CD8-positive, alpha-beta T cell (primary cell): ENCODE measurements at regions of chr18 and their contacts with region 1.

Region 1: DNA sequence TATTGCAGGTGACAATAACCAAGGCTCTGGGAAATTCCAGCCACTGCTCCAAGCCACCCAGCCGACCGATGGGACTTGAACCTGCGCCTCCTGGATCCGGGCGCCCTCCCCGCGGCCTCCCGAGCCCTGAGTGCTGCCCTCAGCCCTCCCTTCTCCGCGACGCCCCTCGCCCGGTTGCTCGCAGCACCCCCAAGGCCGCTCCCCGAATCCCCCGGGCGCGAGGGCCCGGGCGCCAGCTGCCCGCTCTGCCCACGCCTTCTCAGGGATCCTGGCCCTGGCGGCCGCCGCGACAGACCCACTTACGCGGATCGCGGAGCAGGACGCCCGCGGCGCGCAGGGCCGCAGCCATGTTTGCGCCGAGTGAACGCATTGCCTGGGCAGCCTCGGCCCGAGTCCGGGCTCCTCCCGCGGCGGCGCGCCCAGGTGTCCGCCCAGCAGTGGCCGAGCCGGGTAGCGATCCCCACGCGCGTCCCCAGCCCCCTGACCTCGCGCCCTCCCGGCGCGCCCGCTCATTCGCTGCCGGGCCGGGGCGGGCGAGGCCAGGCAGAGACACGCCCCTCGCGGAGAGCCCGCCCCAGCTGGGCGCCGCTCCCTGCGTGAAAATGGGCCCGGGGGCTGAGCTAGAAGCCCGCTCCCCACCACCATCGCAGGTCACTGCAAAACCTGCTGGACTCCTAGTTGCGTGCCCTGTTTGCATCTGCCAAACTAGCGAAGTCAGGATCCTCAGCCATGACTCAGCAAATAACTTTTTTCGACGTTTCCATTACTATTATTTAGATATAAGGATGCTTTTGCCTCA is at the start of gene FECH:
- DNase-seq: peak; percentile 34 to 82 (median 66)
- ATAC-seq: peak; percentile 97
- H3K4me3 ChIP-seq: peak within 1 kb of the TSS; percentile 73 to 87
- H3K4me3 Mint-ChIP-seq: peak within 1 kb of the TSS; percentile 88
- H3K27ac ChIP-seq: peak within 1 kb of the TSS; percentile 29 to 66
- H3K27ac Mint-ChIP-seq: peak within 1 kb of the TSS; percentile 85
- H3K4me1 ChIP-seq: peaks cover 23% of the 10 kb centered on the region
- H3K4me1 Mint-ChIP-seq: peaks cover 26% of the 10 kb centered on the region
- H3K27me3 ChIP-seq: no peaks in the 10 kb centered on the region
- H3K27me3 Mint-ChIP-seq: no peaks in the 10 kb centered on the region
- CTCF ChIP-seq: no peak
- total RNA-seq, gene FECH: 10.6 to 11.3 TPM

Region 2: GRCh38 chr18:56727399-56727798 is 859.1 kb before region 1 on chr18:
- CTCF ChIA-PET with region 1: no interaction called
- POLR2A ChIA-PET with region 1: no interaction called
- intact Hi-C with region 1: no loop called
- DNase-seq: no peak
- ATAC-seq: no peak
- H3K4me3 ChIP-seq: no peak overlapping the region
- H3K4me3 Mint-ChIP-seq: no peak overlapping the region
- H3K27ac ChIP-seq: no peak overlapping the region
- H3K27ac Mint-ChIP-seq: no peak overlapping the region
- H3K4me1 ChIP-seq: no peaks in the 10 kb centered on the region
- H3K4me1 Mint-ChIP-seq: no peaks in the 10 kb centered on the region
- H3K27me3 ChIP-seq: no peaks in the 10 kb centered on the region
- H3K27me3 Mint-ChIP-seq: no peaks in the 10 kb centered on the region
- CTCF ChIP-seq: no peak

Region 3: GRCh38 chr18:57630002-57630753 is 43.7 kb after region 1 on chr18:
- CTCF ChIA-PET with region 1: no interaction called
- POLR2A ChIA-PET with region 1: interaction called, 3 read pairs
- intact Hi-C with region 1: loop called in 1 of 2 experiments (anchors 2 kb)
- DNase-seq: peak; percentile 86 to 96 (median 95)
- ATAC-seq: peak; percentile 99
- H3K4me3 ChIP-seq: peak overlapping the region; percentile 71 to 90
- H3K4me3 Mint-ChIP-seq: peak overlapping the region; percentile 97
- H3K27ac ChIP-seq: peak overlapping the region; percentile 46 to 59
- H3K27ac Mint-ChIP-seq: peak overlapping the region; percentile 92
- H3K4me1 ChIP-seq: peaks cover 15% of the 10 kb centered on the region
- H3K4me1 Mint-ChIP-seq: peaks cover 16% of the 10 kb centered on the region
- H3K27me3 ChIP-seq: no peaks in the 10 kb centered on the region
- H3K27me3 Mint-ChIP-seq: no peaks in the 10 kb centered on the region
- CTCF ChIP-seq: peak; percentile 70